Caco-2 (cell line): ENCODE measurements at regions of chr19 and their contacts with region 1.

Region 1: GRCh38 chr19:53431399-53432087 is at the start of gene ZNF761:
- DNase-seq: peak; percentile 97 to 99
- H3K4me3 ChIP-seq: peak within 1 kb of the TSS; percentile 91
- H3K4me3 Mint-ChIP-seq: peak within 1 kb of the TSS; percentile 81
- H3K27ac Mint-ChIP-seq: peak within 1 kb of the TSS; percentile 83
- H3K4me1 ChIP-seq: peaks cover 11% of the 10 kb centered on the region
- H3K4me1 Mint-ChIP-seq: peaks cover 10% of the 10 kb centered on the region
- H3K27me3 ChIP-seq: no peaks in the 10 kb centered on the region
- H3K27me3 Mint-ChIP-seq: no peaks in the 10 kb centered on the region
- CTCF ChIP-seq: peak; percentile 47 to 59
- total RNA-seq, gene ZNF761: 19.3 and 20.0 TPM in 2 replicates

Region 2: GRCh38 chr19:53333463-53334449 is 97.8 kb before region 1 on chr19 and contains the start of gene ZNF845:
- CTCF ChIA-PET with region 1: no interaction called
- POLR2A ChIA-PET with region 1: no interaction called
- intact Hi-C with region 1: loop called (anchors 2 kb)
- DNase-seq: peak; percentile 97 to 98
- H3K4me3 ChIP-seq: peak within 1 kb of the TSS; percentile 51
- H3K4me3 Mint-ChIP-seq: peak within 1 kb of the TSS; percentile 82
- H3K27ac Mint-ChIP-seq: peak within 1 kb of the TSS; percentile 60
- H3K4me1 ChIP-seq: 0 out of 2 replicates have a peak, but pooled peaks cover 3% of the 10 kb centered on the region
- H3K4me1 Mint-ChIP-seq: peaks cover 8% of the 10 kb centered on the region
- H3K27me3 ChIP-seq: no peaks in the 10 kb centered on the region
- H3K27me3 Mint-ChIP-seq: no peaks in the 10 kb centered on the region
- CTCF ChIP-seq: no peak
- total RNA-seq, gene ZNF845: 8.0 and 8.9 TPM in 2 replicates

Region 3: GRCh38 chr19:53381379-53381778 is 50.2 kb before region 1 on chr19:
- CTCF ChIA-PET with region 1: no interaction called
- POLR2A ChIA-PET with region 1: no interaction called
- intact Hi-C with region 1: no loop called
- DNase-seq: no peak
- H3K4me3 ChIP-seq: no peak overlapping the region
- H3K4me3 Mint-ChIP-seq: no peak overlapping the region
- H3K27ac Mint-ChIP-seq: no peak overlapping the region
- H3K4me1 ChIP-seq: no peaks in the 10 kb centered on the region
- H3K4me1 Mint-ChIP-seq: no peaks in the 10 kb centered on the region
- H3K27me3 ChIP-seq: no peaks in the 10 kb centered on the region
- H3K27me3 Mint-ChIP-seq: no peaks in the 10 kb centered on the region
- CTCF ChIP-seq: no peak

Region 4: DNA sequence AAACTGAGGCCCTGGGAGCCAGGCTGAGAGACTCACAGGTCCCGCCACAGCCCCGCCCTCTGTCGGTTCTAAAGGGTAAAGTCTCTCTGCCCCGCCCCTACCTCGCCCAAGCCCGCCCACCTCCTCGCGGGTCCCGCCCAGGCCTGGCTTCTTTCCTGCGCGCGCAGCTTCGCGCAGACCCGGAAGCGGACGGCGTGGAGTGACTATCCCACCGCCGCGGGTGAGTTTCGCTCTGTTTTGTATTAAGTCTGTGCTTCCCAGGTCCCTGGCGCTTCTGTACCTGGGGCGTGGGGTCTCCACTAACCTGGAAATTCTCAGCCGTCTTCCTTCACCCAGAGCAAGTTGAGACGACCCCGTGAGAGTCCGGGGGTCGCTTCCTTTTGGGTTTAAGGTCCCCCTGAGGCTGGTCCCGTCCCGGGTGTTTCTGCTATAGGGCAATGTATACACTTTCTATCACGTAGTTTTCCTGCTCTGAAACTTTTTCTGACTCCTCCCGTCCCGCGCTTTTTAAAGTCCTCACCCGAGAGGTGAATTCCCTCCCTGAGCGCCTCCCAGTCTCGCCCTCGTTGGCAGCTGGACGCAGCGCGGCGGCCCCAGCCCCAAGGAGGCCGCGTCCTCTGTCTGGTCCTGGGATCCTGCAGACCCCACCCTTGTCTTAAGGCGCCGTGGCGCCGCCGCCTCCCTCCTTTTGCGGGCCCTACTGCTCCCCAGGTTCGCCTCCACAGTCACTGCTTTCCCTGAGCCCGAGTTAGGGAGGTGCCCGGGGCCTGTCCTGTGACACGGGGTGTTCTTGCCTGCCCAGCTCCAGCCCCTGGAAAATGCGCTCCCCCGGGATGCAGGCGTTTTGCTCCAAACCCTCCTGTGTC is 36.3 kb before region 1 on chr19 and contains the start of gene ZNF765:
- CTCF ChIA-PET with region 1: interaction called, 4 read pairs
- POLR2A ChIA-PET with region 1: no interaction called
- intact Hi-C with region 1: loop called (anchors 1 kb)
- DNase-seq: peak; percentile 93 to 96
- H3K4me3 ChIP-seq: peak within 1 kb of the TSS; percentile 83
- H3K4me3 Mint-ChIP-seq: peak within 1 kb of the TSS; percentile 77
- H3K27ac Mint-ChIP-seq: peak within 1 kb of the TSS; percentile 65
- H3K4me1 ChIP-seq: peaks cover 8% of the 10 kb centered on the region
- H3K4me1 Mint-ChIP-seq: peaks cover 19% of the 10 kb centered on the region
- H3K27me3 ChIP-seq: no peaks in the 10 kb centered on the region
- H3K27me3 Mint-ChIP-seq: no peaks in the 10 kb centered on the region
- CTCF ChIP-seq: peak; percentile 58 to 76
- total RNA-seq, gene ZNF765: 13.1 and 18.6 TPM in 2 replicates

Region 5: DNA sequence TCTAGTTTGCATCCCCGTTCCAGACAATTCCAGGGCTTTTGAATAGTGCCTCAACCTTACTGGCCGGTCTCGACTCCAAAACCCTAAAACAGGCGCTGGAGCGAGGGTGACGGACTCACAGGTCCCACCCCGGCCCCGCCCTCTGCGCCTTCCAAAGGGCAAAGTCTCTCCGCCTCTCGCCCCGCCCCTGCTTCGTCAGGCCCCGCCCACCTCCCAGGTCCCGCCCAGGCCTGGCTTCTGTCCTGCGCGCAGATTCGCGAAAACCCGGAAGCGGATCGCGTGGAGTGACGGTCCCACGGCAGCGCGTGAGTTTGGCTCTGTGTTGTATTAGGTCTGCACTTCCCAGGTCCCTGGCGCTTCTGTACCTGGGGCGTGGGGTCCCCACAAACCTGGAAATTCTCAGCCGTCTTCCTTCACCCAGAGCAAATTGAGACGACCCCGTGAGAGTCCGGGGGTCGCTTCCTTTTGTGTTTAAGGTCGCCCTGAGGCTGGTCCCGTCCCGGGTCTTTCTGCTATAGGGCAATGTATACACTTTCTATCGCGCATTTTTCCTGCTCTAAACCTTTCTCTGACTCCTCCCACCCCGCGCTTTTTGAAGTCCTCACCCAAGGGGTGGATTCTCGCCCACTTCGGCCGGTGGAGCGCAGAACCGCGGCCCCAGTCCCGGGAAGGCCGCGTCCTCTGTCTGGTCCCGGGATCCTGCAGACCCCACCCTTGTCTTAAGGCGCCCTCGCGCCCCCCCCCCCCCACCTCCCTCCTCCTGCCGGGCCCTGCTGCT is 36.1 kb after region 1 on chr19 and contains the start of gene ZNF813:
- CTCF ChIA-PET with region 1: no interaction called
- POLR2A ChIA-PET with region 1: no interaction called
- intact Hi-C with region 1: loop called (anchors 5 kb)
- DNase-seq: peak; percentile 94 to 95
- H3K4me3 ChIP-seq: peak within 1 kb of the TSS; percentile 94
- H3K4me3 Mint-ChIP-seq: peak within 1 kb of the TSS; percentile 92
- H3K27ac Mint-ChIP-seq: peak within 1 kb of the TSS; percentile 80
- H3K4me1 ChIP-seq: no peaks in the 10 kb centered on the region
- H3K4me1 Mint-ChIP-seq: peaks cover 19% of the 10 kb centered on the region
- H3K27me3 ChIP-seq: no peaks in the 10 kb centered on the region
- H3K27me3 Mint-ChIP-seq: no peaks in the 10 kb centered on the region
- CTCF ChIP-seq: no peak
- total RNA-seq, gene ZNF813: 7.4 and 7.9 TPM in 2 replicates